ENCODE measurements at regions of chr12 and their contacts with region 1.

Region 1: GRCh38 chr12:674272-674781 is 11.1 kb upstream of the NINJ2 start:
- DNase-seq: no peak
- ATAC-seq: peak in 2 of 4 donors; percentile 44 to 45
- H3K4me3 ChIP-seq: no peak overlapping the region
- H3K27ac ChIP-seq: peak overlapping the region in 1 of 12 donors; percentile 78
- H3K4me1 ChIP-seq: peaks cover 0 to 16% (median 0%) of the 10 kb centered on the region in 12 donors
- H3K27me3 ChIP-seq: no peaks in the 10 kb centered on the region
- CTCF ChIP-seq: no peak
- POLR2A ChIP-seq: no peak

Region 2: GRCh38 chr12:701896-702539 is 27.7 kb after region 1 on chr12:
- intact Hi-C with region 1: loop called in 1 of 10 experiments (anchors 2 kb)
- DNase-seq: no peak
- ATAC-seq: no peak
- H3K4me3 ChIP-seq: no peak overlapping the region
- H3K27ac ChIP-seq: no peak overlapping the region
- H3K4me1 ChIP-seq: peaks cover 0 to 22% (median 3%) of the 10 kb centered on the region in 12 donors
- H3K27me3 ChIP-seq: no peaks in the 10 kb centered on the region
- CTCF ChIP-seq: no peak
- POLR2A ChIP-seq: no peak